ENCODE measurements at regions of chr2 and their contacts with region 1.

Region 1: DNA sequence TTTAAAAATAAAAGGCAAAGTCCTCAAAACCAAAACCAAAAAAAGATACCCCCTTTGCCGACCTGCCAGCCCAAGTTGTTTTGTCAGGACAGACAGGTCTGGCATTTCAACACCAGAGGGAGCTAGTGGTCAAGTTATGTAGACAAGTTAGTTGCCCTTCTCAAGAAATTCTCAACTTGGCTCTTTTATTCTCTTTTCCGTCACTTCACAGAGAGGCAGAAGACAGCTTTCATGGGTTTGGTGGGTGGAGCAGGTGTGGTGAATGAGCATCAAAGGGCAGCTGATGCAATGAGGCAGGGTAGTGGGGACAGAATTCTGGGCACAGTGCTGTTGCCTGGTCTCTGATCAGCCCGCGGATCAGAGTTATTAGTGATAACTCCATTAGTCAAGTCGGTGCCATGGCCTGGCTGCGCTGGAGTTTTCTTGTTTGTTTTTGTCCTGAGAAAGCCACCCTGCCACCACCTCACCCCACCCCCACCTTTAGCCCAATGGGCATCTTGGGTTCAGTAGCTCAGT is 303.7 kb upstream of the EPAS1 start:
- DNase-seq: peak; percentile 89
- H3K4me3 Mint-ChIP-seq: no peak overlapping the region
- H3K27ac Mint-ChIP-seq: no peak overlapping the region
- H3K4me1 Mint-ChIP-seq: peaks cover 27% of the 10 kb centered on the region
- H3K27me3 Mint-ChIP-seq: no peaks in the 10 kb centered on the region
- CTCF ChIP-seq: peak; percentile 84

Region 2: GRCh38 chr2:45643543-45644542 is 349.7 kb before region 1 on chr2:
- CTCF ChIA-PET with region 1: interaction called, 9 read pairs
- POLR2A ChIA-PET with region 1: no interaction called
- intact Hi-C with region 1: loop called (anchors 1 kb)
- DNase-seq: peak; percentile 62
- H3K4me3 Mint-ChIP-seq: peak overlapping the region; percentile 73
- H3K27ac Mint-ChIP-seq: peak overlapping the region; percentile 37
- H3K4me1 Mint-ChIP-seq: peaks cover 17% of the 10 kb centered on the region
- H3K27me3 Mint-ChIP-seq: no peaks in the 10 kb centered on the region
- CTCF ChIP-seq: peak; percentile 96

Region 3: GRCh38 chr2:45935791-45936622 is 57.5 kb before region 1 on chr2:
- CTCF ChIA-PET with region 1: interaction called, 8 read pairs
- POLR2A ChIA-PET with region 1: interaction called, 20 read pairs
- intact Hi-C with region 1: loop called (anchors 1 kb)
- DNase-seq: peak; percentile 99
- H3K4me3 Mint-ChIP-seq: no peak overlapping the region
- H3K27ac Mint-ChIP-seq: peak overlapping the region; percentile 29
- H3K4me1 Mint-ChIP-seq: peaks cover 39% of the 10 kb centered on the region
- H3K27me3 Mint-ChIP-seq: no peaks in the 10 kb centered on the region
- CTCF ChIP-seq: peak; percentile 88

Region 4: GRCh38 chr2:46003903-46004473 is 10.5 kb after region 1 on chr2:
- CTCF ChIA-PET with region 1: interaction called, 19 read pairs
- POLR2A ChIA-PET with region 1: interaction called, 7 read pairs
- intact Hi-C with region 1: no loop called
- DNase-seq: no peak
- H3K4me3 Mint-ChIP-seq: no peak overlapping the region
- H3K27ac Mint-ChIP-seq: no peak overlapping the region
- H3K4me1 Mint-ChIP-seq: no peaks in the 10 kb centered on the region
- H3K27me3 Mint-ChIP-seq: no peaks in the 10 kb centered on the region
- CTCF ChIP-seq: no peak

Region 5: DNA sequence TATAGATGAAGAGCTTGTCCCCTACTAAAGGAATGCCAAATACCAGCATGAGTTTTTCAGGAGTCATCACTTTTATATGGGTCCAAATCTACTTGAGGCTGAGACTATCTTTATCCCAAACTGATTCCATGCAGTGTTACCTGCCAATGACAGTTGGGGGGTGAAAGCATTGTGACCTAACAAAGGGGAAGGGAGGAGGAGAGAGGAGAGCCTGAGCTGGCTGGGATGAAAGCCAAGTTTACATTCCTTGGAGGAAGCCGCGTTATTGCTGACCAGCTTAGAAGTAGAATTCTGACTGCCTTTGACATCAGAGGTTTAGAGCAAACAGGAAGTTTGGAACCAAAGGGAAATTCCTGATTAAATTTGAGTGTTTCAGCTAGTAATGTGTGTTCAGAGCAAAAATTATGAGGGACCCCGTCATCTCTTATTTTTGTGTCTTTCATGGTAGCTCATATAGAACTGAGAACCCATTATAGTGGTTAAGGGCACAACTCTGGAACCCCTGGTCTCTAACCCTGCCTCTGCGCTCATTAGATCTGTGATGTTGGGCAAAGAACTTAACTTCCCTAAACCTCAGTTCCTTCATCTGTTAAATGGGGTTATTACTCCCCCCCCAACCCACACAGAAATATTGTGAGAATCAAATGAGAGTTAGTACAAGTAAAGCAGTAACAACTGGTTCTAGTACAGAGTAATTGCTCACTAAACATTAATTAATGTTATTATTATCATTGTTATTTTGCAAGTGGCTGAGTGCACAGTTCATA is 104.4 kb after region 1 on chr2:
- CTCF ChIA-PET with region 1: no interaction called
- POLR2A ChIA-PET with region 1: interaction called, 10 read pairs
- intact Hi-C with region 1: no loop called
- DNase-seq: peak; percentile 92
- H3K4me3 Mint-ChIP-seq: peak overlapping the region; percentile 19
- H3K27ac Mint-ChIP-seq: peak overlapping the region; percentile 92
- H3K4me1 Mint-ChIP-seq: peaks cover 20% of the 10 kb centered on the region
- H3K27me3 Mint-ChIP-seq: no peaks in the 10 kb centered on the region
- CTCF ChIP-seq: no peak

Region 6: DNA sequence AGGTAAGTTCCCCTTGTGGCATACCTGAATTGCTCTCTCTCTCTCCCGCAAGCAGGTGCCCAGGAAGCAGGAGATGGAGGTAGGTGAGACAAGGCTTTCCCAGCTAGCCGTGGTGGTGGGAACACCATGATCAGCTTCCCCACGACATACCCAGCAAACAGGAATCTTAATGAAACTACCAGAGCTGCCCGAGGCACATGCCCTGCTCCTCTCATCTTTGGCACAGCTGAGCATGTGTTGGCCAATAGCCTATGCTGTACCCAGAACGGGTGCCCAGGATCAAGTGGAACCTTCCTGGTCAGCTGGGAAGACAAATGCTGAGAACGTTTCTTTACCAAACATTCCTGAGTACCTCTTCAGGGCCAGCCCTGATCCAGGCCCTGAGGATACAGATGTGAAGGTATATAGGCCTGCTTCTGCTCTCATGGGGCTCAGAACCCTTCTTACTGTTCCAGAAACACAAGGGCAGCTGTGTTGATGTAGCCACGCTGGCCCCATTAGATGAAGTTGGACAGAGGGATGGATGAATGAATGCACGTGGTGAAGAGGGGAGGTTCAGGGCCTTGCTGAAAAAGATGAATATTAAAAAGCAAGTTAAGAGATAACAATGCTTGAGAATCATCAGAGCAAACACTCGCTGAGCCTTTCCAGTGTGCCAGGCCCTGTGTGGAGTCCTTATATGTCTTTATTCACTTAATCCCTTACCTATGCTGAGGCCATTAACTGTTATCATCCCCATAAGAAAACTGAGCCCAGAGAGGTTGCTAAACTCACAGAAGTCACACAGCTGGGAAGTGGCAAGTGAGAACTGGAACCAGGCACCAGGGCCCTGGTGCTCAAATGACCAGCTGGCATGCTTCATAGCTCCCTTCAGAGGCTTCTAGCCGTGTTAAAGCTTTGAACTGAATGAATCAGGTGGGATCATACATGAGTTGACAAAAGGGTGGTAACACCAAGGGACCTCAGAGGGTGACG is 417.0 kb after region 1 on chr2:
- CTCF ChIA-PET with region 1: no interaction called
- POLR2A ChIA-PET with region 1: interaction called, 10 read pairs
- intact Hi-C with region 1: no loop called
- DNase-seq: peak; percentile 57
- H3K4me3 Mint-ChIP-seq: no peak overlapping the region
- H3K27ac Mint-ChIP-seq: peak overlapping the region; percentile 82
- H3K4me1 Mint-ChIP-seq: peaks cover 35% of the 10 kb centered on the region
- H3K27me3 Mint-ChIP-seq: no peaks in the 10 kb centered on the region
- CTCF ChIP-seq: no peak